ENCODE measurements at regions of chr10 and their contacts with region 1.

Region 1: DNA sequence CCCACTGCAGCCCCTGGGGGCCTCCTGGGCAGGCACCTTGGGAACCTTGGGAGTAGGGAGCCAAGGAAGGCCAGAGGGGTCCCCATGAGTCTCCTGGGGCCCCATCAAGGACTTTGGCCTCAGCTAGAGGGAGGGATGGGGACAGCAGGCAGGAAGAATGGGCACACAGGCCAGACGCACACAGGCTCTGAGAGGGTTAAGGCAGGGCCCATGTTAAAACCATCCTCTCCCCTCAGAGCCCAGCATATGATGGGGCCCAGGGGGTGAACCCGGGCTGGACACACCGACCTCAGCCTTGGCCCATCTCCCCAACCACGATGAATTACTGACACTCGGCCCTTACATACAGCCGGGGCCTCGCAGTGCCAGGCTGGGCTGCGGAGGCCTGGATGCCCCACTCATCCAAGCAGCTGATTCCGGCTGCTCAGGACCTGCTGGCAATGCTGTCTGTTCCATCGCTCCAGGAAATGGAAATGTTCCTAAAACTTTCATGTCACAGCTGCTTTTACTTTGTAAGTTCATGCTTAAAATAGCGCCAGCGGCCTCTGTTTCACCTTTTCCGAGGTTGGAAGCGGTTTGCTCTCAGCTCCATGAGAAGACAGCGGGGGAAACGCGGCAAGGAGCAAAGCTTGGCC is 17.3 kb upstream of the INPP5A start:
- DNase-seq: no peak
- H3K4me3 ChIP-seq: no peak overlapping the region
- H3K27ac ChIP-seq: no peak overlapping the region
- H3K4me1 ChIP-seq: peaks cover 17% of the 10 kb centered on the region
- H3K27me3 ChIP-seq: no peaks in the 10 kb centered on the region
- CTCF ChIP-seq: no peak

Region 2: DNA sequence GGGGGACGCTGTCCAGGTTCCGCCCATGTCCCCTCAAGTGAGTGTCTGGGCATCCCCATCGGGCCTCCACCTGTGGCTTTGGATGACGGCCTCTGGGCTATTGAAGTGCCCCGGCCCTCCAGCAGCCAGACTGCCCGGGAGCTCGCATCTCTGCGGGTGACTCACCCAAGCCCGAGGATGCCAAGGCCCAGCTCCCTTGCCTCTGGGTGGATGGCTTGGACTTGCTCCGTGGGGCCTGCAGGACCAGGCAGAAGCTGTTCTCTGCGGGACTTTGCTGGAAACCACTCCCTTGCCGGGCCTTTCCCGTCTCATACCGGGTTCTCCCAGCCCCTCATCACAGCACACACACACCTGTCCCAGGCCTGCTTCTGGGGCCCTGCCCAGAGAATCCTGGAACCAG is 311.2 kb before region 1 on chr10:
- CTCF ChIA-PET with region 1: no interaction called
- dilution Hi-C with region 1: loop called (anchors 10 kb)
- in situ Hi-C with region 1: no loop called
- intact Hi-C with region 1: no loop called
- DNase-seq: no peak
- H3K4me3 ChIP-seq: no peak overlapping the region
- H3K27ac ChIP-seq: no peak overlapping the region
- H3K4me1 ChIP-seq: no peaks in the 10 kb centered on the region
- H3K27me3 ChIP-seq: no peaks in the 10 kb centered on the region
- CTCF ChIP-seq: no peak

Region 3: GRCh38 chr10:132229834-132230556 is 290.3 kb before region 1 on chr10:
- CTCF ChIA-PET with region 1: no interaction called
- dilution Hi-C with region 1: loop called (anchors 5 kb)
- in situ Hi-C with region 1: no loop called
- intact Hi-C with region 1: no loop called
- DNase-seq: no peak
- H3K4me3 ChIP-seq: peak overlapping the region in 2 of 3 experiments; percentile 2 to 11
- H3K27ac ChIP-seq: no peak overlapping the region
- H3K4me1 ChIP-seq: peaks cover 4% of the 10 kb centered on the region
- H3K27me3 ChIP-seq: no peaks in the 10 kb centered on the region
- CTCF ChIP-seq: no peak

Region 4: GRCh38 chr10:132616170-132616995 is 96.1 kb after region 1 on chr10:
- CTCF ChIA-PET with region 1: no interaction called
- dilution Hi-C with region 1: loop called (anchors 5 kb)
- in situ Hi-C with region 1: no loop called
- intact Hi-C with region 1: no loop called
- DNase-seq: no peak
- H3K4me3 ChIP-seq: no peak overlapping the region
- H3K27ac ChIP-seq: no peak overlapping the region
- H3K4me1 ChIP-seq: no peaks in the 10 kb centered on the region
- H3K27me3 ChIP-seq: no peaks in the 10 kb centered on the region
- CTCF ChIP-seq: no peak

Measured in mammary epithelial cell (primary cell).